ENCODE measurements at regions of chr16 and their contacts with region 1.

Region 1: GRCh38 chr16:28317040-28317880 is 24.9 kb downstream of the SBK1 start:
- H3K4me3 ChIP-seq: no peak overlapping the region
- H3K27ac ChIP-seq: no peak overlapping the region
- H3K4me1 ChIP-seq: no peaks in the 10 kb centered on the region
- CTCF ChIP-seq: peak; percentile 87

Region 2: GRCh38 chr16:28304214-28304613 is 13.0 kb before region 1 on chr16:
- CTCF ChIA-PET with region 1: interaction called, 15 read pairs
- POLR2A ChIA-PET with region 1: interaction called, 4 read pairs
- H3K4me3 ChIP-seq: no peak overlapping the region
- H3K27ac ChIP-seq: no peak overlapping the region
- H3K4me1 ChIP-seq: no peaks in the 10 kb centered on the region
- CTCF ChIP-seq: no peak